ENCODE measurements at regions of chr20 and their contacts with region 1.

Region 1: DNA sequence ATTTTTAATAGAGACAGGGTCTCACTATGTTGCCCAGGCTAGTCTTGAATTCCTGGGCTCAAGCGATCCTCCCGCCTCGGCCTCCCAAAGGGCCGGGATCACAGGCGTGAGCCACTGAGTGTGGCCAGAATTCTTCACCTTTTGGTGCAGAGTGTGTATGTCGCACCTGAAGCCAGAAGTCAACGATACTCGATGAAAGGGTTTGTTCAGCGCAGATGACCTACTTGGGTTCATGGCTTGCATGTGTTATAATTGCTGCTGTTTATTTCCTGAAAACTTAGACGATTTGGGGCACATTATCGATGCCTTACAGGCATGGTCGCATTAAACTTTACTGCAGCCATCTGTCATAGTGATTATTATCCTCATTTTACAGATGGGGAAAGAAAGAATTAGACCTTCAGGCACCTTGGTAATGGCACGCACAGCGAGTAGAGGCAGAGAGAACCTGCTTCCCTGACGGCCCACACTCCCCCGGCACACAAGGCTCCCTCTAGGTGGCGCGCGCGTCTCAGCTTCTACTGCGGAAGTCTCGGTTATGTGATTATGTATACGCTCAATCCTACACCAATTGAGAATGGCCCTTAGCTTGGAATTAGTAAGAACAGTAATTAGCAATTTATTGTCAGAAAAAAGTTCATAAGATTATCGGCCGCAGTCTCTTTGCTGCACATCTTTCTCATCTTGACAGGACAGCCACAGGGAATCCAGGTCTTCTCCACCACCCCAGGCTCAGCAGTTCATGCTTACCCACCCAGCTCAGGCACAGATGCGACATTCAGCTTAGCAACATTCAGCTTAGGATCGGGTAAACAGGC is 212.8 kb upstream of the PROKR2 start:
- DNase-seq: peak; percentile 75 to 85 (median 76)
- H3K4me3 ChIP-seq: no peak overlapping the region
- H3K4me3 Mint-ChIP-seq: peak overlapping the region; percentile 11 to 81 (median 70)
- H3K27ac ChIP-seq: no peak overlapping the region
- H3K27ac Mint-ChIP-seq: peak overlapping the region; percentile 15 to 92 (median 76)
- H3K4me1 ChIP-seq: peaks cover 3% of the 10 kb centered on the region
- H3K4me1 Mint-ChIP-seq: peaks cover 12 to 19% (median 15%) of the 10 kb centered on the region in 4 donors
- H3K27me3 ChIP-seq: no peaks in the 10 kb centered on the region
- H3K27me3 Mint-ChIP-seq: peaks cover 0 to 1% of the 10 kb centered on the region in 2 donors

Region 2: DNA sequence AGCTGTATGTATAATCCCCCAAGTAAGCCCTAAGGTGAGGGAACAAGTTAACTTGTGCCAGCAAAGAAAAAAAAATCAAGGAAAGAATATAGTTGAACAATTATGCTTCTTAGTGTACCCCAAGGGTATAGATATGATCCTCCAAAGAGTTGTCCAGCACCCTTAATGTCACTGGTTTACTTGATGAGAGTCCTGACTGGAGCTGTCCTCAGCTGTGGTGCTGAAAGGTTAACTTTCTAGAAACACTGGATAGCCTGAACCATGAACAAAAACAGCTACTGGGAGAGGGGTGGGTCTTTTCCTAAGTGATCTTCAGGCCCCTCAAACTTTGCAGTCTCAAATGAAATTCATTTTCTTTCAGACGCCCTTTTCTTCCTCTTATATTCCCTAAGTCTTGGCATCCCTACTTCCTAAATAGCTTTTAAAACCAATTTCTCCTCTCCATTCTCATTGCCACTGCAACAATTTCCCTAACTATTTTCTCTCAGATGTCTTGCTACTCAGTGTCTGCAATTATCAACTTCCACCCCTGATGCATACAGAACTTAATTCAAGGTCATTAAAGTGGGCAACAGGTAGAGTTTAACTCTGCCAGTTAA is 129.3 kb before region 1 on chr20:
- CTCF ChIA-PET with region 1: no interaction called
- POLR2A ChIA-PET with region 1: no interaction called
- intact Hi-C with region 1: no loop called
- DNase-seq: no peak
- H3K4me3 ChIP-seq: no peak overlapping the region
- H3K4me3 Mint-ChIP-seq: no peak overlapping the region
- H3K27ac ChIP-seq: no peak overlapping the region
- H3K27ac Mint-ChIP-seq: no peak overlapping the region
- H3K4me1 ChIP-seq: no peaks in the 10 kb centered on the region
- H3K4me1 Mint-ChIP-seq: no peaks in the 10 kb centered on the region
- H3K27me3 ChIP-seq: no peaks in the 10 kb centered on the region
- H3K27me3 Mint-ChIP-seq: peaks cover 7 to 9% of the 10 kb centered on the region in 2 donors

Region 3: GRCh38 chr20:5513975-5514516 is 15.5 kb before region 1 on chr20:
- CTCF ChIA-PET with region 1: interaction called, 16 read pairs
- POLR2A ChIA-PET with region 1: no interaction called
- intact Hi-C with region 1: no loop called
- DNase-seq: no peak
- H3K4me3 ChIP-seq: no peak overlapping the region
- H3K4me3 Mint-ChIP-seq: no peak overlapping the region
- H3K27ac ChIP-seq: no peak overlapping the region
- H3K27ac Mint-ChIP-seq: no peak overlapping the region
- H3K4me1 ChIP-seq: no peaks in the 10 kb centered on the region
- H3K4me1 Mint-ChIP-seq: peaks cover 0 to 4% (median 0%) of the 10 kb centered on the region in 4 donors
- H3K27me3 ChIP-seq: no peaks in the 10 kb centered on the region
- H3K27me3 Mint-ChIP-seq: no peaks in the 10 kb centered on the region

Region 4: DNA sequence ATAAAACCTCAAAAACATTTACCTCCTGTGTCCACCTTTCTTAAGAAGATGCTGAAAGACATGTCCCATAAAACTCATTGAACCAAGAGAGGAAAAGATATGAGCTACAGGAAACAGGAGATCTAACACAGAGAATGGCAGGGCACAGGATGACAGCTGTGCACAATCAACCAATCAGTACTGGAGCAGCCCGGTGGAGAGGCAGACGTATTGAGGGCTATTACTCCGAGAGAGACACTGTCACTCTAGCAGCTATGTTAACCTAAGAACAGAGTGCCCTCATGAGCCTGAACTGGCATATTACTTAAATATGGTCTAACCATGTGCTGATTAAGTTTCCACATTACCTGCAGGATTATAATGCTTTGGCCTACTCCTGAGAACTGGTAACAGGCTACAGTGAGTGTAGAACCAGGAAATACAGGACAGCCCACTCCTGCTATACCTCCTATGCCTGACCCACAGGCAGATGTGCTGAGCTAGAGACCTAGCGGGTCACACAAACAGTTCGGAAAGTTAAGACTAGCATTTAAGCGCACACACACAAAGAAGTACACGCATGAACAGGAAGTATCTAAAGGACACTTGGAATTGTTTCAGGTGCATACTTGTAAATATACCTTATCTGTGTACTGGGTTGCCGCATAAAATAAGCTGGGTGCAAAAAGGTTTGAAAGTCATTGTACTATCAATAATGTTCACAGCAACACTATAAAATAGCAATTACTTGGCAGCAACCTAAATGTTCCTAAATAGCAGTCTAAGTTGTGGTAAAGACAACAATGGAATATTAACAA is 21.4 kb after region 1 on chr20:
- CTCF ChIA-PET with region 1: interaction called, 23 read pairs
- POLR2A ChIA-PET with region 1: no interaction called
- intact Hi-C with region 1: no loop called
- DNase-seq: no peak
- H3K4me3 ChIP-seq: no peak overlapping the region
- H3K4me3 Mint-ChIP-seq: no peak overlapping the region
- H3K27ac ChIP-seq: no peak overlapping the region
- H3K27ac Mint-ChIP-seq: peak overlapping the region in 2 of 7 donors; percentile 9 to 43
- H3K4me1 ChIP-seq: no peaks in the 10 kb centered on the region
- H3K4me1 Mint-ChIP-seq: peaks cover 0 to 10% (median 2%) of the 10 kb centered on the region in 4 donors
- H3K27me3 ChIP-seq: no peaks in the 10 kb centered on the region
- H3K27me3 Mint-ChIP-seq: no peaks in the 10 kb centered on the region

Region 5: DNA sequence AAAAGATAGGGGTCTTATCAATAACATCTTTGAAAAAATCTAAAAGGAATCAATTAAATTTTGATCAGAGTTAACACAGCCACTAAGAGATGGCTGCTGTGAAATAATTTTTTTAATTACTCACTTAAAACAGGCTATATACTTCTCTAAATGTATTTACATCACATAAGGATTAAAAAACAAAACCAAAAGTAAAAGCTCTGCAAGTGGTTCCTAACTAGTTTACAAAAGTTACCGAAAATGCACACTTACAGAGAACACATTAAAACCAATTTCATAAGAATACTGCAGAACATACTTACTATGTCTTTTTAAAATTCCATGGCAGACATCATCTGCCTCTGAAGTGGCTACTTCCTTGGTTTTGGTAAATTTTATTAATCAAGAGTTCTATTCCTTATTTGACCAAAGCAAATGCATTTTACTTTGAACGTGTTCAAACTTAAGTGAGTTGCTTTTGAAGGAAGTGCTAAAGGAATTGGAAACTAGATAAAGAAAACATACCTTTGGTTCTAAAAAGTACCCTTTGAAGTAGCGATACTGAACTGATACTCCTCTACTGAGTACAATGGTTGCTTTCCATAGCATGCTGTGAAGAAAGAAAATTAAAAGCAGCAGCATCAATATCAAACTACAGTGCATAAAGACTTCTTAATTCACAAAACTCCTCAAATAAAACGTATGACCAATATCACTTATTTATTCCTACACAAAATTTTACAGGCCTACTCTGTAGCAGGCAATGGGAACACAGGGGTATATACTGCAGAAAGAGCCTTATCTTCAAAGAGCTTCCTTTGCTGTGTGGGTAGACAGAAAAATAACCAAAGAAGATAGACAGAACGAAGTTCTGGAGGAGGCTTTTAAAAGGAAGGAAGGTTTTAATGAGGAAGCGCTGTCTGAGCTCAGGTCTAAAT is 63.5 kb after region 1 on chr20:
- CTCF ChIA-PET with region 1: interaction called, 12 read pairs
- POLR2A ChIA-PET with region 1: no interaction called
- intact Hi-C with region 1: no loop called
- DNase-seq: peak in 2 of 5 donors; percentile 16 to 33
- H3K4me3 ChIP-seq: peak overlapping the region in 1 of 2 donors; percentile 23
- H3K4me3 Mint-ChIP-seq: peak overlapping the region; percentile 47 to 84 (median 76)
- H3K27ac ChIP-seq: peak overlapping the region; percentile 61
- H3K27ac Mint-ChIP-seq: peak overlapping the region; percentile 76 to 96 (median 93)
- H3K4me1 ChIP-seq: peaks cover 74% of the 10 kb centered on the region
- H3K4me1 Mint-ChIP-seq: peaks cover 38 to 78% (median 44%) of the 10 kb centered on the region in 4 donors
- H3K27me3 ChIP-seq: no peaks in the 10 kb centered on the region
- H3K27me3 Mint-ChIP-seq: no peaks in the 10 kb centered on the region

Region 6: DNA sequence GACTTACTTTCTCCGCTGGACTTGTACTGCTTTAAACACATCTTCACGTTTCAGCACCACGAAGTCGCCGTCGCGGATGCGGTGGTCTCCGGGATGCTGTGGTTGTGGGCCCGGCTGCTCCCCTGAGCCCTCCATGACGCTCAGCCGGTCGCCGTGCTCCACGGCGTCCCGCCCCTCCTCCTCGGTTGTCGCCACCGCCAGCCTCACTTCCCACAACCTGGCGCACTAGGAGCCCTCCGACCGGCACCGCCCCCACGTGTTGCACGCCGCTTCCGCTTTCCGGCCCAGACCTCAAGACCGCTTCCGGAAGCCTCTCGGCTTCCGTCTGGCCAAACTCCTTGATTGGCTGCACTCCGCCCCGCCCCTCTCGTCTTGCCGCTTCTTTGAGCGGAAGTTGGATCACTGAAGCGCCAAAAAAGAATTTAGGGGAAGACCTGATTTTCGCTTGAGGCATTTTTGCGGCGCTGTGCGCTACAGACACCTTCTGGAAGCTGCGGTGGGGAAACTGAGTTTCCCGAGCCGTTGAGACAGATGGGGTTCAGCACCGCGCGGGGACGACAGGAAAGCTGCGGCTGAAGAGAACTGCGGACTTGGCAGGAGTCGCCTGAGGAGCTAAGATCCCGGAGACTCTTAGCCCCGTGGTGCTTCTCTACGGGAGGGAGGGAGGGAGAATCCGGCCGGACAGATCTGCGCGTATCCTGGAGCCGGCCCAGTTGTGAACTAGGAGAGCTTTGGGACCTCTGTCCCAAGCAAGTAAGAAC is 420.9 kb after region 1 on chr20 and contains the starts of genes MCM8 and TRMT6:
- CTCF ChIA-PET with region 1: interaction called, 3 read pairs
- POLR2A ChIA-PET with region 1: no interaction called
- intact Hi-C with region 1: loop called (anchors 1 kb)
- DNase-seq: peak; percentile 94 to 98 (median 95)
- H3K4me3 ChIP-seq: peak within 1 kb of the TSS; percentile 90 to 97
- H3K4me3 Mint-ChIP-seq: peak within 1 kb of the TSS; percentile 92 to 100 (median 98)
- H3K27ac ChIP-seq: peak within 1 kb of the TSS; percentile 73
- H3K27ac Mint-ChIP-seq: peak within 1 kb of the TSS; percentile 95 to 99 (median 99)
- H3K4me1 ChIP-seq: peaks cover 34% of the 10 kb centered on the region
- H3K4me1 Mint-ChIP-seq: peaks cover 28 to 39% (median 34%) of the 10 kb centered on the region in 4 donors
- H3K27me3 ChIP-seq: no peaks in the 10 kb centered on the region
- H3K27me3 Mint-ChIP-seq: peaks cover 1 to 2% of the 10 kb centered on the region in 2 donors
- total RNA-seq, gene MCM8: 10.2 to 11.1 TPM
- total RNA-seq, gene TRMT6: 17.9 to 18.3 TPM

Region 7: GRCh38 chr20:6074145-6074561 is 544.6 kb after region 1 on chr20:
- CTCF ChIA-PET with region 1: interaction called, 145 read pairs
- POLR2A ChIA-PET with region 1: no interaction called
- intact Hi-C with region 1: loop called (anchors 1 kb)
- DNase-seq: peak in 3 of 5 donors; percentile 3 to 16 (median 5)
- H3K4me3 ChIP-seq: no peak overlapping the region
- H3K4me3 Mint-ChIP-seq: no peak overlapping the region
- H3K27ac ChIP-seq: no peak overlapping the region
- H3K27ac Mint-ChIP-seq: no peak overlapping the region
- H3K4me1 ChIP-seq: no peaks in the 10 kb centered on the region
- H3K4me1 Mint-ChIP-seq: peaks cover 0 to 3% (median 0%) of the 10 kb centered on the region in 4 donors
- H3K27me3 ChIP-seq: no peaks in the 10 kb centered on the region
- H3K27me3 Mint-ChIP-seq: peaks cover 5 to 6% of the 10 kb centered on the region in 2 donors

Measured in CD4-positive, alpha-beta memory T cell (primary cell).